CD8-positive, alpha-beta T cell (primary cell): ENCODE measurements at regions of chr10 and their contacts with region 1.

Region 1: DNA sequence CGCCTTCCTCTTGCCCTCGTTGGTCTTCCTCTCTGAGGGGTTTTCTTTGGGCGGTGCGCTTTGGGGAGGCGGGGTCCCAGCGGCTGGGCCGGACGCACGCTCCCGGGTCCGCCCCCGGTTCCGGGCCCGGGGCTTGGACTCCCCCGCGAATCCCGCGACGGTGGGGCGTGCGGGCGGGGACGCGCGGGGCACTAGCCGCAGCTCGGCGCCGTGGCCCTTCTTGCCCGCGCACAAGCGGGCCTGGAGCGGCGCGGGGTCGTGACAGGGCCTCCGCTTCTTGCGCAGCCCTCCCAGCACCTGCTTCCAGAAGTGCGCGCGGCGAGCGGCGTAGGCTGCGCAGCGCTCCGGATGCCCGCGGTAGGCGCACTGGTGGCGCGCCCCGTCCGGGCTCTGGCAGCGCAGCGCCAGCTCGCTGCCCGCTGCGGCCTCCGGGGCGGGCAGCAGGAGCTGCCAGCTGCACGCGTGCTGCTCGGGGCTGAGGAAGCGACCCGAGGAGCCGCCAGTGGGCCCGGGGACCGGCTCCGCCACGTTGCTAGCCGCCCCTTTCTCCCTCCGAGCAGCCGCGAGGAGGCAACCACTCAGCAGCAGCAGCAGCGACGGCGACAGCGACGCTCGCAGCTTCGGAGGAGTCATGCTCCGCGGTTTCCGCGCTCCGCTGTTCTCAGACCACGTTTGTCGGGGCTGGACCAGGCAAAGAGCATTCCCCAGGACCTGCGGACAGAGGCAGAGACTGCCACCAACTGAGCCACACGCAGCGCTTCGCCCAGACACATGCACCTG is 759 bp downstream of the FGFBP3 start:
- DNase-seq: peak; percentile 47 to 87 (median 70)
- ATAC-seq: peak; percentile 79
- H3K4me3 ChIP-seq: peak overlapping the region; percentile 51 to 82
- H3K4me3 Mint-ChIP-seq: peak overlapping the region; percentile 88
- H3K27ac ChIP-seq: peak overlapping the region; percentile 39 to 73
- H3K27ac Mint-ChIP-seq: peak overlapping the region; percentile 83
- H3K4me1 ChIP-seq: peaks cover 15% of the 10 kb centered on the region
- H3K4me1 Mint-ChIP-seq: peaks cover 28% of the 10 kb centered on the region
- H3K27me3 ChIP-seq: no peaks in the 10 kb centered on the region
- H3K27me3 Mint-ChIP-seq: peaks cover 3% of the 10 kb centered on the region
- CTCF ChIP-seq: peak; percentile 52

Region 2: DNA sequence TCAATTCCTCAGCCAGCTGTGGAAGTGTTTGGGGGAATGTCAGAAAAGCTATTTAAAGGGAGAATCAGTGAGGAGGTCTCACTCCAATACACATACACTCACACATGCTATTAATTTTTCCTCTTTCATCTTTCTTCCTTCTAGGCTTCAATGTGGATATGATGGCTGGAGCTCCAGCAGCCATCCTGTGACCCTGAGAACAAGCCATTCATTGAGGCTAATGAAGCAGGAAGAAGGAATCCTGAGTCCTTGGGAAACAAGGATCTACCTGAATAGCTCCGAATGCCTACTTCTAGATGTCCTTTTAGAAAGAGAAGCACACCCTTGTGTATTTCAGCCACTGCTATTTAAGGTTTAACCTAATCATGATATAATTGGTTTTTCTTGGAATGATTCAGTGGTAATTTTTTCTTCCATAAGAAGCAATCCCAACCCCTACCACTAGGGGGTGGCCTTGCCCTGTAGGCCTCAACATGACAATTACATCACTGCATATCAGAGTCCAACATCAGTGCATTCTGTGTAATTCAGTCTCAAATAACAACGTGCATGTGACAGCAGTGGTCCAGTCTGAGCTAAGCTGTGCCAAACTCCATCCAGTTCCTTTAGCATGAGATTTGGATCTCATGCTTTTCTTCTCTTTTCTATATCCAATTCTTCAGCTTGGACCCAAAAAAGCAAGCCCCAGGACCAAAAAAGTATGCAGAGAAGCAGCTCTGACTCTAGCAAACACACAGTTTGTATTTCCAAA is 902.4 kb before region 1 on chr10:
- CTCF ChIA-PET with region 1: no interaction called
- POLR2A ChIA-PET with region 1: no interaction called
- intact Hi-C with region 1: loop called (anchors 5 to 10 kb)
- DNase-seq: peak; percentile 37 to 81 (median 68)
- ATAC-seq: peak; percentile 91
- H3K4me3 ChIP-seq: no peak overlapping the region
- H3K4me3 Mint-ChIP-seq: peak overlapping the region; percentile 73
- H3K27ac ChIP-seq: peak overlapping the region in 1 of 2 experiments; percentile 11
- H3K27ac Mint-ChIP-seq: peak overlapping the region; percentile 73
- H3K4me1 ChIP-seq: peaks cover 20% of the 10 kb centered on the region
- H3K4me1 Mint-ChIP-seq: peaks cover 21% of the 10 kb centered on the region
- H3K27me3 ChIP-seq: no peaks in the 10 kb centered on the region
- H3K27me3 Mint-ChIP-seq: no peaks in the 10 kb centered on the region
- CTCF ChIP-seq: peak; percentile 94

Region 3: GRCh38 chr10:91409869-91410637 is 498.5 kb before region 1 on chr10 and contains the start of gene HECTD2:
- CTCF ChIA-PET with region 1: interaction called, 3 read pairs
- POLR2A ChIA-PET with region 1: interaction called, 7 read pairs
- intact Hi-C with region 1: loop called (anchors 1 to 5 kb)
- DNase-seq: peak; percentile 65 to 92 (median 82)
- ATAC-seq: peak; percentile 86
- H3K4me3 ChIP-seq: peak within 1 kb of the TSS; percentile 91 to 97
- H3K4me3 Mint-ChIP-seq: peak within 1 kb of the TSS; percentile 86
- H3K27ac ChIP-seq: peak within 1 kb of the TSS; percentile 90 to 95
- H3K27ac Mint-ChIP-seq: peak within 1 kb of the TSS; percentile 90
- H3K4me1 ChIP-seq: peaks cover 12% of the 10 kb centered on the region
- H3K4me1 Mint-ChIP-seq: peaks cover 13% of the 10 kb centered on the region
- H3K27me3 ChIP-seq: no peaks in the 10 kb centered on the region
- H3K27me3 Mint-ChIP-seq: no peaks in the 10 kb centered on the region
- CTCF ChIP-seq: peak; percentile 41
- total RNA-seq, gene HECTD2: 0.69 to 1.5 TPM

Region 4: GRCh38 chr10:91758303-91759146 is 150.0 kb before region 1 on chr10:
- CTCF ChIA-PET with region 1: interaction called, 64 read pairs
- POLR2A ChIA-PET with region 1: interaction called, 10 read pairs
- intact Hi-C with region 1: loop called (anchors 1 kb)
- DNase-seq: peak in 2 of 9 experiments; percentile 67 to 77
- ATAC-seq: peak; percentile 78
- H3K4me3 ChIP-seq: no peak overlapping the region
- H3K4me3 Mint-ChIP-seq: no peak overlapping the region
- H3K27ac ChIP-seq: no peak overlapping the region
- H3K27ac Mint-ChIP-seq: no peak overlapping the region
- H3K4me1 ChIP-seq: no peaks in the 10 kb centered on the region
- H3K4me1 Mint-ChIP-seq: peaks cover 5% of the 10 kb centered on the region
- H3K27me3 ChIP-seq: no peaks in the 10 kb centered on the region
- H3K27me3 Mint-ChIP-seq: peaks cover 11% of the 10 kb centered on the region
- CTCF ChIP-seq: peak; percentile 74

Region 5: DNA sequence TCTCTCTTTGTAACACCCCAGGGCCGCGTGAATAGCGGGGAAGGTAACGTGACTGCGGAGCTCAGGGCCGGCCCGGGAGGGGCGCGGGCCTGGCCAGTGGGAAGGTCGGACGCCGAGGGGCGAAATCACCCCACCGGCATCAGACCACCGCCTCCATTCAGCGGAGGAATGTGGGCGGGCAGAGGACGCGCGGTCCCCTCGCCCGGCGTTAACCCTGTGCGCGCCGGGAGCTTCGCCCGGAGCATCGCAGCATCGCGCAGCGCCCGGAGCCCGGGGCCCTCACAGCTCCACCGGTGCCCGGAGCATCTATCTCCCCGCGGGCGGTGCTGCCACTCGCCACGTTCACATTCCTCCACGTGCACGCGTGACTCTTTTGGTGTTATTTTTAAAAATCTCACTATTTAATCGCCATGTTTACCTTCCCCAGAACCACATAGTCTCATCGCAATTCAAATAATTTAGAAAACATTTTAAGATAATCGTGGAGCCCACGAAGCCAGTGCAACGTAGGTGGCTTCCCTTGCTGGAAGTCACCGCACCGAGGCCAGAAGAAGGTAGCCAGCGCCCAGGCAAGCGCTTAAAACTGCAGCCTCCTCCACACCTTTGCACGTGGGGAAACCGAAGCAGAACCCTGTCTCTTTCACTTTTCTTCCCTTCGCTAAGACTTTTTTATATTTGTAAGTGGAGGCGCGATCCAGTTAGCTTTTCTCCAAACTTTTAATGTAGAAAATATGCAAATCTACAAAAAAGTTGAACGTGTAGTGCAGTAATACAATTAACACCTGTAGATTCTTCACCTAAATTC is 21.1 kb before region 1 on chr10:
- CTCF ChIA-PET with region 1: interaction called, 4 read pairs
- POLR2A ChIA-PET with region 1: interaction called, 4 read pairs
- intact Hi-C with region 1: loop called (anchors 1 to 2 kb)
- DNase-seq: peak in 6 of 9 experiments; percentile 19 to 60 (median 30)
- ATAC-seq: peak; percentile 67
- H3K4me3 ChIP-seq: peak overlapping the region; percentile 60 to 67
- H3K4me3 Mint-ChIP-seq: peak overlapping the region; percentile 90
- H3K27ac ChIP-seq: no peak overlapping the region
- H3K27ac Mint-ChIP-seq: no peak overlapping the region
- H3K4me1 ChIP-seq: peaks cover 9% of the 10 kb centered on the region
- H3K4me1 Mint-ChIP-seq: peaks cover 11% of the 10 kb centered on the region
- H3K27me3 ChIP-seq: no peaks in the 10 kb centered on the region
- H3K27me3 Mint-ChIP-seq: peaks cover 4% of the 10 kb centered on the region
- CTCF ChIP-seq: no peak

Region 6: GRCh38 chr10:92184977-92185376 is 276.4 kb after region 1 on chr10:
- CTCF ChIA-PET with region 1: no interaction called
- POLR2A ChIA-PET with region 1: no interaction called
- intact Hi-C with region 1: no loop called
- DNase-seq: no peak
- ATAC-seq: no peak
- H3K4me3 ChIP-seq: no peak overlapping the region
- H3K4me3 Mint-ChIP-seq: no peak overlapping the region
- H3K27ac ChIP-seq: no peak overlapping the region
- H3K27ac Mint-ChIP-seq: no peak overlapping the region
- H3K4me1 ChIP-seq: no peaks in the 10 kb centered on the region
- H3K4me1 Mint-ChIP-seq: no peaks in the 10 kb centered on the region
- H3K27me3 ChIP-seq: no peaks in the 10 kb centered on the region
- H3K27me3 Mint-ChIP-seq: no peaks in the 10 kb centered on the region
- CTCF ChIP-seq: no peak